CD4-positive, alpha-beta T cell (primary cell): ENCODE measurements at regions of chr7 and their contacts with region 1.

Region 1: GRCh38 chr7:142196066-142196840 is 61.6 kb downstream of the PRSS58 start:
- DNase-seq: no peak
- ATAC-seq: no peak
- H3K4me3 ChIP-seq: no peak overlapping the region
- H3K4me3 Mint-ChIP-seq: no peak overlapping the region
- H3K27ac ChIP-seq: no peak overlapping the region
- H3K27ac Mint-ChIP-seq: no peak overlapping the region
- H3K4me1 ChIP-seq: no peaks in the 10 kb centered on the region
- H3K4me1 Mint-ChIP-seq: no peaks in the 10 kb centered on the region
- H3K27me3 ChIP-seq: peaks cover 5 to 21% of the 10 kb centered on the region in 2 experiments
- H3K27me3 Mint-ChIP-seq: peaks cover 12% of the 10 kb centered on the region
- CTCF ChIP-seq: no peak

Region 2: GRCh38 chr7:141975806-141976523 is 220.3 kb before region 1 on chr7:
- CTCF ChIA-PET with region 1: no interaction called
- POLR2A ChIA-PET with region 1: interaction called, 3 read pairs
- intact Hi-C with region 1: loop called in 1 of 2 experiments (anchors 10 kb)
- DNase-seq: peak; percentile 26 to 76 (median 54)
- ATAC-seq: peak; percentile 78
- H3K4me3 ChIP-seq: peak overlapping the region; percentile 52
- H3K4me3 Mint-ChIP-seq: peak overlapping the region; percentile 68
- H3K27ac ChIP-seq: no peak overlapping the region
- H3K27ac Mint-ChIP-seq: peak overlapping the region; percentile 20
- H3K4me1 ChIP-seq: peaks cover 11% of the 10 kb centered on the region
- H3K4me1 Mint-ChIP-seq: peaks cover 21% of the 10 kb centered on the region
- H3K27me3 ChIP-seq: no peaks in the 10 kb centered on the region
- H3K27me3 Mint-ChIP-seq: no peaks in the 10 kb centered on the region
- CTCF ChIP-seq: peak; percentile 78

Region 3: DNA sequence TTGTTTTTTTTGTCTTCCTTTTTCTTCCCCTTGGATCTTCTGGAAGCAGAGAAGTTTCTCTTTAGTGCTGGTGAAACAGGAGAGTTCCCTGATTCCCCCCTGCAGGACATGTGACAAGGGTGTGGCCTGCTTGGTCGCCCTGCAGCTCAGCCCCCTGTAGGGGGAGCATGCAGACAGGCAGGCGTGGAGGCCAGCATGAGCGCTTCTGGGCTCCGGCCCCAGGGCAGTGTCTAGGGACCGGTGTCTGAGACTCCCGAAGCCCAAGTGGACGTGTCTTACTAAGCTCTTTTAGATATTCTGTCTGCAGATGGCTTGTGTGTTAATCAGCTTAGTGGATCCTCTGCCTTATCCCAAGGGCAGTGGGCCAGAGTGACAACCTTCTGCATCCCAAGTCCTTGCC is 35.5 kb after region 1 on chr7:
- CTCF ChIA-PET with region 1: no interaction called
- POLR2A ChIA-PET with region 1: no interaction called
- intact Hi-C with region 1: no loop called
- DNase-seq: no peak
- ATAC-seq: no peak
- H3K4me3 ChIP-seq: no peak overlapping the region
- H3K4me3 Mint-ChIP-seq: no peak overlapping the region
- H3K27ac ChIP-seq: no peak overlapping the region
- H3K27ac Mint-ChIP-seq: no peak overlapping the region
- H3K4me1 ChIP-seq: no peaks in the 10 kb centered on the region
- H3K4me1 Mint-ChIP-seq: no peaks in the 10 kb centered on the region
- H3K27me3 ChIP-seq: no peaks in the 10 kb centered on the region
- H3K27me3 Mint-ChIP-seq: peaks cover 30% of the 10 kb centered on the region
- CTCF ChIP-seq: no peak